Sigmoid colon (tissue), 7 donors: ENCODE measurements at regions of chr15 and their contacts with region 1.

Region 1: DNA sequence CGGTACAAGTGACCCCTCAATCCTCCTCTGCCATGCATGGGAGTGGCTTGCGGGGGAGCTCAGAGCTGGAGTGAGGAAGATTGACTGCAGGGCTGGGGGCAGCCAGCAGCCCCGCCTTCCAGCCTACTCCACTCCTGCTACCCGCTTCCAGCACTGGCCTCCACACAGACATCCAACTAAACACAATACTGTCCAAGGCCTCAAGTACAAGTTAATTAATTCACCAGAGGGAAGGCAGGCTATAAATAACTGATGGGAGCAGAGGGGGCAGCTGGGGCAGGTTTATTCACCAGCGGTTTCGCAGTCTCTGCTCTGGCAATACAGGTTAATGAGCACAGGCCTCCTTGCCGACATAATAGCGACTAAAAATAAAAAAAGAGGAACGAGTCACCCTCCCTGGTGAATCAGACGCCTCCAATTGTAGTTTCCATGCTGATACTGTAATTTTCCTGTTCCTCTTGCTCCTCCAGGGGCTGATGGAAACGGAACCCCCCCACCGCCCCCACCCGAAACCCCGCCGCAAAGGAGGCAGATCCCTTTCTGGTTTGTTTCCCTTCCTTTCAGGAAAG is 166.4 kb upstream of the TLE3 start:
- DNase-seq: peak; percentile 84
- H3K4me3 ChIP-seq: no peak overlapping the region
- H3K27ac ChIP-seq: peak overlapping the region; percentile 22 to 74 (median 54)
- H3K4me1 ChIP-seq: peaks cover 0 to 69% (median 49%) of the 10 kb centered on the region in 4 donors
- H3K27me3 ChIP-seq: no peaks in the 10 kb centered on the region
- CTCF ChIP-seq: no peak
- EP300 ChIP-seq: peak in 3 of 4 donors; percentile 6 to 28 (median 23)
- POLR2A ChIP-seq: no peak

Region 2: GRCh38 chr15:70152070-70152480 is 112.0 kb before region 1 on chr15:
- intact Hi-C with region 1: loop called (anchors 5 kb)
- DNase-seq: peak; percentile 76
- H3K4me3 ChIP-seq: no peak overlapping the region
- H3K27ac ChIP-seq: peak overlapping the region in 3 of 4 donors; percentile 80 to 87 (median 86)
- H3K4me1 ChIP-seq: peaks cover 0 to 86% (median 56%) of the 10 kb centered on the region in 4 donors
- H3K27me3 ChIP-seq: no peaks in the 10 kb centered on the region
- CTCF ChIP-seq: no peak
- EP300 ChIP-seq: no peak
- POLR2A ChIP-seq: no peak

Region 3: GRCh38 chr15:70164910-70165715 is 99.0 kb before region 1 on chr15:
- intact Hi-C with region 1: no loop called
- DNase-seq: peak; percentile 65
- H3K4me3 ChIP-seq: no peak overlapping the region
- H3K27ac ChIP-seq: peak overlapping the region; percentile 69 to 82 (median 72)
- H3K4me1 ChIP-seq: peaks cover 0 to 46% (median 41%) of the 10 kb centered on the region in 4 donors
- H3K27me3 ChIP-seq: no peaks in the 10 kb centered on the region
- CTCF ChIP-seq: no peak
- EP300 ChIP-seq: no peak
- POLR2A ChIP-seq: no peak